CD4-positive, alpha-beta memory T cell (primary cell): ENCODE measurements at regions of chr6 and their contacts with region 1.

Region 1: DNA sequence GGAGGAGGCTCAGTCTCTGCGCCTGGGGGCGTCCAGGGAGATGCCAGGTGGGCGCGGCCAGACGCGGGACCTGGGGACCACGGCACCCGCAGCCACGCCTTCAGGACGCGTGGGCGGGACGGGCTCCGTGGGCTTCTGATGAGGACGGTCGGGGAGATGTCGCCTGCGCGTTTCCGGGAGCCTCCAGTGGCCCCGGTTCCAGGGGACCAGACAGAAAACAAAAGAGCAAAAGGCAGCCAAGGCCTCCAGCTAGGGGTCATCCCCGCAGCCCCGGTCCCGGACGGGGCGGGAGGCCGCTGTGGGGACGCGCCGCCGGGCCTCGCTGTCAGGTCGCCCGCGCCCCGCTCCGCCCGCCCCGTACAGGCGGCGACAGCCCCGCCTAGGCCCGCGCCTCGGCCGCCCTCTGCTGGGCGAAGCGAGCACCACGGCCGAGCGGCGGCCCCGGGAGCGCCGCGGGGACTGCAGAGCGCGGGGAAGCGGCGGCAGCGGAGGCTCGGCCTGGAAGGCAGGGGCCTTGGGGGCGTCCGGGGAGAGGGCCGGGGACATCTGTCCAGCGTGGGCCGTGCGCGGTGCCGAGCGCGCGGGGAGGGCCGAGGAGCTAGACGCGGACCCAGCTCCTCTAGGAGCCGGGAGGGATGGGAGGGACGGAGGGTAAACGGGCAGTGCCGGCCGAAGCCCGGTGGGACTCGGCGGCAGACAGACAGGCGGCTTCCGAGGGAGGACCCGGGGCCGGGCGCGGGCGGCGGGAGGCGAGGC is 48.7 kb downstream of the TMEM242 start:
- DNase-seq: peak; percentile 85 to 92 (median 90)
- H3K4me3 ChIP-seq: peak overlapping the region; percentile 36 to 86
- H3K4me3 Mint-ChIP-seq: peak overlapping the region; percentile 89 to 96 (median 93)
- H3K27ac ChIP-seq: peak overlapping the region; percentile 69
- H3K27ac Mint-ChIP-seq: peak overlapping the region; percentile 95 to 98 (median 96)
- H3K4me1 ChIP-seq: peaks cover 11% of the 10 kb centered on the region
- H3K4me1 Mint-ChIP-seq: peaks cover 2 to 16% (median 8%) of the 10 kb centered on the region in 4 donors
- H3K27me3 ChIP-seq: no peaks in the 10 kb centered on the region
- H3K27me3 Mint-ChIP-seq: no peaks in the 10 kb centered on the region

Region 2: DNA sequence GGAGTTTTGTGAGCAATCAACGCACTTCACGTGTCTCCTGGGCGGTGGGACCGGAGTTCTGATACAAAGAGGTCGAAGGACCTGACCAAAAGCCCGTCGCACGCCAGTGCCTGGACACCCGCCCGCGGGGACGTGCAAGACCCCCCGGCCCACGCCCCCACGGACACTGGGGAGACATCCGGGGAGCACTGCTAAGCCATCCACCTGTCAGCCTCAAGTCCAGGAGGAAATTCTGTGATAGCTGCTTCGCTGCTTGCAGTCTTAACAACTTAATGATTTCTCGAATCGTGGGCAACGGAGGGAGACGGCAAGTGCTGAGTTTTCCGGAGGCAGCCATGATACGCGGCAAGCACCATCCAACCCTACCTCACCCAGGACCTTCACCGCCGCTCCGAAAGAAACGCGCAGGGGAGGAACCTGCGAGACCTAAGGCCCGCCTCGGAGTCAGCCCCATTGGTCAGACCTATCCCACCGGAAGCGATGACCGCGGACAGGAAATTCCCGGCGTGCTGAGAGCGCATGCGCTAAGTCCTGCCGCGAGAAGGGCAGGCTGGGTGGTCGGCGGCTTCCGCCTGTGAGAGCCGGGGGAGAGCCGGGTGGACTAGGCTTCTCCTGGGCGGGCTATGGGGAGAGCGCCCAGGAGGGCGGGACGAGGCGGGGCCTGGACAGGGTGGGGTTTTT is 1960.4 kb before region 1 on chr6 and contains the start of gene TFB1M:
- CTCF ChIA-PET with region 1: no interaction called
- POLR2A ChIA-PET with region 1: no interaction called
- intact Hi-C with region 1: loop called (anchors 5 kb)
- DNase-seq: peak; percentile 97 to 98 (median 97)
- H3K4me3 ChIP-seq: peak within 1 kb of the TSS; percentile 85 to 95
- H3K4me3 Mint-ChIP-seq: peak within 1 kb of the TSS; percentile 92 to 98 (median 96)
- H3K27ac ChIP-seq: peak within 1 kb of the TSS; percentile 96
- H3K27ac Mint-ChIP-seq: peak within 1 kb of the TSS; percentile 95 to 98 (median 97)
- H3K4me1 ChIP-seq: peaks cover 37% of the 10 kb centered on the region
- H3K4me1 Mint-ChIP-seq: peaks cover 15 to 52% (median 35%) of the 10 kb centered on the region in 4 donors
- H3K27me3 ChIP-seq: no peaks in the 10 kb centered on the region
- H3K27me3 Mint-ChIP-seq: no peaks in the 10 kb centered on the region
- total RNA-seq, gene TFB1M: 36.6 to 45.7 TPM

Region 3: GRCh38 chr6:156564127-156564806 is 710.4 kb before region 1 on chr6:
- CTCF ChIA-PET with region 1: no interaction called
- POLR2A ChIA-PET with region 1: no interaction called
- intact Hi-C with region 1: loop called (anchors 1 kb)
- DNase-seq: peak; percentile 58 to 66 (median 63)
- H3K4me3 ChIP-seq: no peak overlapping the region
- H3K4me3 Mint-ChIP-seq: peak overlapping the region in 1 of 8 donors; percentile 12
- H3K27ac ChIP-seq: no peak overlapping the region
- H3K27ac Mint-ChIP-seq: peak overlapping the region in 1 of 7 donors; percentile 24
- H3K4me1 ChIP-seq: peaks cover 7% of the 10 kb centered on the region
- H3K4me1 Mint-ChIP-seq: peaks cover 0 to 4% (median 1%) of the 10 kb centered on the region in 4 donors
- H3K27me3 ChIP-seq: no peaks in the 10 kb centered on the region
- H3K27me3 Mint-ChIP-seq: peaks cover 6 to 13% of the 10 kb centered on the region in 2 donors

Region 4: DNA sequence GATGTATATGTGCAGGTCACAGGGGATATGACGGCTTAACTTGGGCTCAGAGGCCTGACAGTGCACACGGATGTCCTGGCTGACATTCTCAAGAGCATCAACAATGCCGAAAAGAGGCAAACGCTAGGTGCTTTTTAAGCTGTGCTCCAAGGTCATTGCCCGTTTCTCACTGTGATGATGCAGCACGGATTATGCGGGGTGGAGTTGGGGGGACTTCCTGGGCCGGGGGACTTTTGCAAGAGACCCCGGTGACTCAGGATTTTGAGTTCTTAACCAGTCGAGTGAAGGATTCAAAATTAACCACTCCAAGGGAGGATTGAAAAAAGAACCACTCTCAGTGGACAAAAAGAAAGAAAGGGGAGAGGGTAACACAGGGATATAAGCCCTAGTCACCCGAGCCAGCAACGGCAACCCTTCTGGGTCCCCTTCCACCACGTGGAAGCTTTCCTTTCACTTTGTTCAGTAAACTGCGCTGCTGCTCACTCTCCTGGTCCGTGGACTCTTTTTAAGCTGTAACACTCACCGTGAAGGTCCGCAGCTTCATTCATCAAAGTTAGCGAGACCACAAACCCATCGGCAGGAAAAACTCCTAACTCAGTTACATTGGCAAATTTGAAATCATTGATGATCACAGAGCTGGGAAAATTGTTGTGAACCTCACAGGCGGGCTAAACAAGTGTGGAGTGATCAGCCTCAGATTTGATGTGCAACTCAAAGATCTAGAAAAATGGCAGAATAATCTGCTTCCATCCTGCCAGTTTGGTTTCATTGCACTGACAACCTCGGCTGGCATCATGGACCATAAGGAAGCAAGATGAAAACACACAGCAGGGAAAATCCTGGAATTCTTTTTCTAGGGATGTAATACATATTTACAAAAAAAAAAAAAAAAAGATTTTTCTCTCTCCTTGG is 298.2 kb before region 1 on chr6:
- CTCF ChIA-PET with region 1: no interaction called
- POLR2A ChIA-PET with region 1: no interaction called
- intact Hi-C with region 1: no loop called
- DNase-seq: peak in 3 of 5 donors; percentile 9 to 59 (median 21)
- H3K4me3 ChIP-seq: peak overlapping the region in 1 of 2 donors; percentile 37
- H3K4me3 Mint-ChIP-seq: peak overlapping the region; percentile 62 to 88 (median 76)
- H3K27ac ChIP-seq: no peak overlapping the region
- H3K27ac Mint-ChIP-seq: peak overlapping the region; percentile 51 to 88 (median 68)
- H3K4me1 ChIP-seq: peaks cover 80% of the 10 kb centered on the region
- H3K4me1 Mint-ChIP-seq: peaks cover 57 to 92% (median 74%) of the 10 kb centered on the region in 4 donors
- H3K27me3 ChIP-seq: no peaks in the 10 kb centered on the region
- H3K27me3 Mint-ChIP-seq: no peaks in the 10 kb centered on the region

Region 5: GRCh38 chr6:157021344-157021992 is 253.2 kb before region 1 on chr6:
- CTCF ChIA-PET with region 1: interaction called, 3 read pairs
- POLR2A ChIA-PET with region 1: interaction called, 15 read pairs
- intact Hi-C with region 1: no loop called
- DNase-seq: peak; percentile 88 to 93 (median 91)
- H3K4me3 ChIP-seq: peak overlapping the region; percentile 54 to 86
- H3K4me3 Mint-ChIP-seq: peak overlapping the region; percentile 95 to 98 (median 96)
- H3K27ac ChIP-seq: peak overlapping the region; percentile 98
- H3K27ac Mint-ChIP-seq: peak overlapping the region; percentile 97 to 100 (median 99)
- H3K4me1 ChIP-seq: peaks cover 31% of the 10 kb centered on the region
- H3K4me1 Mint-ChIP-seq: peaks cover 30 to 55% (median 44%) of the 10 kb centered on the region in 4 donors
- H3K27me3 ChIP-seq: no peaks in the 10 kb centered on the region
- H3K27me3 Mint-ChIP-seq: no peaks in the 10 kb centered on the region

Region 6: DNA sequence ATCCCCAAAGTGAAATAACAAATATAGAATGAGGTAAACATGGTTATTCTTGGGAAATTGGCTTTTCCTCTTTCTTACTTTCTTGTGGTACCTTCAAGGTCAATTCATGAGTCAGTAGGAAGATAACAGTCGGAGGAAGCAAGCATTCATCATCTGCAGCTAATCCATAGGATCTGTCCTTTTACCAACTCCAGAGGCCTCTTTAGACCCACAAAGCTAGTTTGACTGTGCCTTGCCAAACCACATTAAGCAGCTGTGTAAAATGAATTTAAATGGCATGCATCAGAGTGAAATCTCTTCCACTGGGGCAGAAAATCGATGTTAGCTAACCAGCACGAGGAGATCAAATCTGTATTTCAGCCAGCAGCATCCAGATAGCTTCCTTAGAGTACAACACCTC is 122.7 kb before region 1 on chr6:
- CTCF ChIA-PET with region 1: no interaction called
- POLR2A ChIA-PET with region 1: no interaction called
- intact Hi-C with region 1: loop called (anchors 10 kb)
- DNase-seq: no peak
- H3K4me3 ChIP-seq: no peak overlapping the region
- H3K4me3 Mint-ChIP-seq: no peak overlapping the region
- H3K27ac ChIP-seq: no peak overlapping the region
- H3K27ac Mint-ChIP-seq: no peak overlapping the region
- H3K4me1 ChIP-seq: no peaks in the 10 kb centered on the region
- H3K4me1 Mint-ChIP-seq: peaks cover 0 to 16% (median 7%) of the 10 kb centered on the region in 4 donors
- H3K27me3 ChIP-seq: no peaks in the 10 kb centered on the region
- H3K27me3 Mint-ChIP-seq: no peaks in the 10 kb centered on the region

Region 7: DNA sequence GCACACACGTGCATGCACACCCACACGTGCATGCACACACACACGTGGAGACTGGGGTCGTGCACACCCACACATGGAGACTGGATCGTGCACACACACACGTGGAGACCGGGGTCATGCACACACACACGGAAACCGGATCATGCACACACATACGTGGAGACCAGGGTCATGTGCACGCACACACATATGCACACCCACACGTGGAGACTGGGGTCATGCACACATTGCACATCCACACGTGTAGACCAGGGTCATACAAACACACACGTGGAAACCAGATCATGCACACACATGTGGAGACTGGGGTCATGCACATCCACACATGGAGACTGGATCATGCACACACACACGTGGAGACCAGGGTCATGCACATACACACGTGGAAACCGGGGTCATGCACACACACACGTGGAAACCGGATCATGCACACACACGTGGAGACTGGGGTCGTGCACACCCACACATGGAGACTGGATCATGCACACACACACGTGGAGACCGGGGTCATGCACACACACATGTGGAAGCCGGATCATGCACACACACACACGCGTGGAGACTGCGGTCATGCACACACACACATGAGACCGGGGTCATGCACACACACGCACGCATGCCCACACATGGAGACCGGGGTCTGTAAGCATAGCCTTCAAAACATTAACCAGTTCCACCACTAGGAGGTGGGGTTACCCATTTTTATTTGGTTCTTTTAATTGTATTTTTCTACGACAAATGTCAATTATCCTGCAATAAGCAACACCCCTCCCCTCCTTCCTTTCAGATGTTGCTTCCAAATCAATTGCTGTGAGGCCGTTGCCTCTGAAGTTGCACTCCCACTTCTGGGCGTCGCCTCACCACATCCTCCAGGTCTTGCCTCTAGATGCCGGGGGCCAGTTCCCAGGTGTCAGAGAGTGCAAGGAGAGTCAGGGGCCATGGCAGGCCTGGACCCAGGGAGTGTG is 47.2 kb before region 1 on chr6:
- CTCF ChIA-PET with region 1: interaction called, 6 read pairs
- POLR2A ChIA-PET with region 1: interaction called, 12 read pairs
- intact Hi-C with region 1: loop called (anchors 1 kb)
- DNase-seq: peak in 4 of 5 donors; percentile 39 to 51 (median 42)
- H3K4me3 ChIP-seq: peak overlapping the region in 1 of 2 donors; percentile 17
- H3K4me3 Mint-ChIP-seq: peak overlapping the region in 7 of 8 donors; percentile 50 to 72 (median 63)
- H3K27ac ChIP-seq: no peak overlapping the region
- H3K27ac Mint-ChIP-seq: peak overlapping the region in 5 of 7 donors; percentile 48 to 88 (median 72)
- H3K4me1 ChIP-seq: peaks cover 46% of the 10 kb centered on the region
- H3K4me1 Mint-ChIP-seq: peaks cover 29 to 57% (median 40%) of the 10 kb centered on the region in 4 donors
- H3K27me3 ChIP-seq: no peaks in the 10 kb centered on the region
- H3K27me3 Mint-ChIP-seq: peaks cover 0 to 3% of the 10 kb centered on the region in 2 donors

Region 8: GRCh38 chr6:157258878-157259277 is 15.8 kb before region 1 on chr6:
- CTCF ChIA-PET with region 1: interaction called, 7 read pairs
- POLR2A ChIA-PET with region 1: interaction called, 9 read pairs
- intact Hi-C with region 1: loop called (anchors 1 kb)
- DNase-seq: peak; percentile 22 to 56 (median 36)
- H3K4me3 ChIP-seq: no peak overlapping the region
- H3K4me3 Mint-ChIP-seq: no peak overlapping the region
- H3K27ac ChIP-seq: no peak overlapping the region
- H3K27ac Mint-ChIP-seq: peak overlapping the region in 1 of 7 donors; percentile 37
- H3K4me1 ChIP-seq: peaks cover 15% of the 10 kb centered on the region
- H3K4me1 Mint-ChIP-seq: peaks cover 8 to 26% (median 15%) of the 10 kb centered on the region in 4 donors
- H3K27me3 ChIP-seq: no peaks in the 10 kb centered on the region
- H3K27me3 Mint-ChIP-seq: peaks cover 5 to 7% of the 10 kb centered on the region in 2 donors